ENCODE measurements at regions of chr1 and their contacts with region 1.

Region 1: GRCh38 chr1:147665521-147665920 is 4.8 kb downstream of the ACP6 start:
- DNase-seq: no peak
- H3K4me3 ChIP-seq: no peak overlapping the region
- H3K27ac ChIP-seq: no peak overlapping the region
- H3K4me1 ChIP-seq: peaks cover 7% of the 10 kb centered on the region in 2 experiments; a peak in 3 of 4 replicates
- H3K27me3 ChIP-seq: no peaks in the 10 kb centered on the region
- CTCF ChIP-seq: peak; percentile 37
- EP300 ChIP-seq: no peak
- RAD21 ChIP-seq: no peak

Region 2: DNA sequence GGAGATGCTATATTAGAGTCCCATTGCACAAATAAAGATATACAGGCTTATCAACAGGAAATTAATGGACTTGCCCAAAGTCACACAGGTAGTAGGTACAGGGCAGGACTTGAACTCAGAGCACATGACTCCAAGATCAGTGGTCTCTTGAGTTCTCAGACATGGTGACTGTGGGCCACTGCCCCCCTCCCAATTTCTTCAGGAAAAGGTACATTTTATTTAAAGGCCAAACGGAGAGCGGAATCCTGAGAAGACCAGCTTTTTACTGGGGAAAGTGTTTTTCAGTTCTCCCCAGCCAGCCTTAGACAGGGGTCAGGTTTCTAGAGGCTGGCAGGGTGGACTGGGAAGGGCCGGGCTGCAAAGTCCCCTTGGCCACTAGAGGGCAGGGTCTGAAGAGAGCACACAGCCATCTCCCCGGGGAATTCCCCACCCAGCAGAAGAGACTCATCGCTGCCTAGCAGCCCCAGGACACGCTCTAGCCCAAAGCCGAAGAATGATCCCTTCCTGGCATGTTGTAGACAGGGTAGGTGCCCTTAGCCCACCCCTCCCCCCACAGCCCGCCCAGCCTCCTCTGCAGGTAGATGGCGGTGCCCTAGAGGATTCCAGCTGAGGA is 24.9 kb before region 1 on chr1:
- CTCF ChIA-PET with region 1: interaction called, 12 read pairs
- POLR2A ChIA-PET with region 1: no interaction called
- DNase-seq: peak; percentile 68
- H3K4me3 ChIP-seq: no peak overlapping the region
- H3K27ac ChIP-seq: no peak overlapping the region
- H3K4me1 ChIP-seq: no peaks in the 10 kb centered on the region; a peak in 1 of 4 replicates
- H3K27me3 ChIP-seq: no peaks in the 10 kb centered on the region
- CTCF ChIP-seq: peak; percentile 77
- EP300 ChIP-seq: no peak
- RAD21 ChIP-seq: peak; percentile 41

Measured in SK-N-SH (cell line).